ENCODE measurements at regions of chr20 and their contacts with region 1.

Region 1: GRCh38 chr20:24303381-24303780 is 166.0 kb upstream of the SYNDIG1 start:
- DNase-seq: peak in 3 of 10 donors; percentile 26 to 69 (median 65)
- H3K4me3 ChIP-seq: no peak overlapping the region
- H3K27ac ChIP-seq: no peak overlapping the region
- H3K27me3 ChIP-seq: peaks cover 0 to 8% (median 0%) of the 10 kb centered on the region in 45 donors
- CTCF ChIP-seq: peak in 51 of 56 donors; percentile 20 to 76 (median 54)

Region 2: DNA sequence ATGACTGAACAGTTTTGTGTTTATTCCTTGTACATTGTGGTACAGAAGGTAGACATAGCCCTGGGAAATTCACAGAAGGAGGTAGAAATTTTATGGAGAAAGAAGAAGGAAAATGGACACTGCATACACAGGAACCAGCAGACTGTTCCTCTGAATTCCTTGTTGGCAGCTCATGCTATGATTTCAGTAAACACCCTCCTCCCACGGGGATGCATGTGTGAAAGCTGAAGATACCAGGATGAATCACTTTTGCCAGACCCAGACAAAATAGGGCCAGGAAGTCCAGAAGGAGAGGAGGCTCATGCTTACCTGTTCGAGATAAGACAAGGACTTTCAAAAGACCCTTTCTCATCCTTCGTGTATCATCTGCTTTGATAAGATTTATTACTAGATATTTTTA is 204.5 kb before region 1 on chr20:
- intact Hi-C with region 1: no loop called
- DNase-seq: peak in 1 of 10 donors; percentile 75
- H3K4me3 ChIP-seq: no peak overlapping the region
- H3K27ac ChIP-seq: peak overlapping the region in 13 of 59 donors; percentile 2 to 69 (median 34)
- H3K27me3 ChIP-seq: peaks cover 0 to 3% (median 0%) of the 10 kb centered on the region in 45 donors
- CTCF ChIP-seq: no peak

Region 3: GRCh38 chr20:24160563-24161375 is 142.6 kb before region 1 on chr20:
- intact Hi-C with region 1: no loop called
- DNase-seq: peak in 9 of 10 donors; percentile 22 to 74 (median 63)
- H3K4me3 ChIP-seq: peak overlapping the region in 1 of 59 donors; percentile 12
- H3K27ac ChIP-seq: no peak overlapping the region
- H3K27me3 ChIP-seq: no peaks in the 10 kb centered on the region
- CTCF ChIP-seq: peak; percentile 35 to 86 (median 78)

Region 4: DNA sequence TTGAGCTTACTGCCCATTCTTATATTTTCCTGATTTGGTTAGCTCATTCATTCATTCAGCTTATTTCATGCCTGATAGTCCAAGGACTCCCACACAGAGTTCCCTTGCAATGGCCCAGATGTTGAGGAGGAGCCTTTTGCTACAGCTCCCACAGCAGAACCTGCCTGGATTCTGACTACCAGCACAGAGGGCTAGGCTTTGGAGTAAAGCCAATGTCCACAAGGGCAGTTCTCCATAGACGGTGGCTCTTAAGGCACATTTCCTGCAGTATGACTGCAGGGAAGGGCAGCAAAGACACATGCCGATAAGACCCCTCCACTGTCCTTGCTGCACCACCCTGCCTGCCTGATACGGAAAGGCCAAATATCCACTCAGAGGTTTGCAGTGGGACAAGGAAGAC is 53.8 kb after region 1 on chr20:
- intact Hi-C with region 1: no loop called
- DNase-seq: no peak
- H3K4me3 ChIP-seq: no peak overlapping the region
- H3K27ac ChIP-seq: peak overlapping the region in 2 of 59 donors; percentile 1 to 31
- H3K27me3 ChIP-seq: no peaks in the 10 kb centered on the region
- CTCF ChIP-seq: no peak

Region 5: DNA sequence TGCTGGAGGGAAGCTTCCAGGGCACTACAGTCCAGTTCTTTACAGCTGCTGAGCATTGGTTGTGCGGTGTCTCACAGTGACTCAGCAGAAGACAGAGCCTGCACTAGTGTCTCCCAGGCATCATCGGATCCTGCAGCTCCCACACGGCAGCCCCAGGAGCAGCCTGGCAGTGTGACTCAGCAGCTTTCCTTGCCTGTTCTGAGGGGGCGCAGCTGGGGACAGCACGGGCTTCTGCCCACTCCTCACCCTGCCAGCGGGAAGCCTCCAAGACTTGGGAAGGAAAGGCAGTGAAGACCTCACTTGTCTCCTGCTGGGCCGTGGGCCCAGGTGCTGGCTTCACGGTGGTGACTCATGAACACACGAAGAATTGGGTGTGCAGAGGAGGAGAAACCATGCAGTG is 331.5 kb after region 1 on chr20:
- intact Hi-C with region 1: loop called in 1 of 2 experiments (anchors 5 kb)
- DNase-seq: peak; percentile 37 to 91 (median 80)
- H3K4me3 ChIP-seq: peak overlapping the region in 2 of 59 donors; percentile 3 to 10
- H3K27ac ChIP-seq: peak overlapping the region in 47 of 59 donors; percentile 0 to 78 (median 50)
- H3K27me3 ChIP-seq: no peaks in the 10 kb centered on the region
- CTCF ChIP-seq: peak in 2 of 56 donors; percentile 9 to 20

Region 6: DNA sequence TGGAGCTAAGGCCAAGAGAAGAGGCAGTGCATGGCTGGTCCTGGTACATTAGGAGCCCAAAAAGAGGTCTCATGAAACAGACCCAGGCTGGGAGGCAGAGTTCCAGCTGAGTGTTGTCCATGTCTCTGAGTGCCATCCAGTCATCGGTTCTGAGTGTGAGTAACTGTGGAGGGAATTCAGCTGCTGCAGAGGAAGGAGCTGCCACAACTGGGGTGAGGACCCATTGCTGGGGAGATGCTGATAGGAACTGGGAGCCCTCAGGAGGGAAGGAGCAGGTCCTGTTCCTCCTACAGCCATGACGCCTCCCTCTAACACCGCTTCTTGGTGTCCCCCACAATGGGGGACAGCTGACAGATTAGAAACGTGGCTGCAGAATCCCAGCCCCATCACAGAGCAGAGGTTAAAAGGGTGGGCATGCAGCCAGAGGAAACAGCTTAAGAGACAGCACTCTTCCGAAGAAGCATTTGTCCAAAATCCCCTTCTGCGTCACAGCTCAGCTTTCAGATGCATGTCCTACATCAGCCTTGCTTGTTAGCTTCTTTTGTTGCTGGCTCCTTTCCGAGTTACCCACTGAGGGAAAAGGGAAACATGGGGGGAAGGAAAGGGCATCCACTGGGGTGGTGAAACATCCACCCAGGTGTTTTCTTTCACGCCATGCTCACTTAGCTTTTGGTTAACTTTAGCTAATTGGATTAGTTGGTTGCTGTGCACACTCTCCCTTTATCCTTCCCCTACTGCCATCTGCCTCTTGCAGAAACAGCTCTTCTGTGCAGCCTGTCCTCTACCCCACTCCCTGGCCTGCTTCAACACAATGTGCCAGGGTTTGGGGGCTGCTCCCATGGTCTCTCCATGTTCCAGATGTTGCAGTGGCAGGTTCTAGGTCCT is 405.3 kb after region 1 on chr20:
- intact Hi-C with region 1: loop called in 1 of 2 experiments (anchors 5 kb)
- DNase-seq: peak in 1 of 10 donors; percentile 8
- H3K4me3 ChIP-seq: no peak overlapping the region
- H3K27ac ChIP-seq: no peak overlapping the region
- H3K27me3 ChIP-seq: peaks cover 0 to 4% (median 0%) of the 10 kb centered on the region in 45 donors
- CTCF ChIP-seq: peak in 1 of 56 donors; percentile 27

Measured in dorsolateral prefrontal cortex (tissue), 120 donors.